ENCODE measurements at regions of chr6 and their contacts with region 1.

Region 1: GRCh38 chr6:27838058-27838944 is 73.9 kb downstream of the OR2B2 start:
- DNase-seq: peak; percentile 50 to 87
- H3K4me3 ChIP-seq: peak overlapping the region; percentile 71 to 80
- H3K27ac ChIP-seq: peak overlapping the region; percentile 95 to 96
- H3K4me1 ChIP-seq: peaks cover 0 to 8% of the 10 kb centered on the region in 2 donors
- H3K27me3 ChIP-seq: no peaks in the 10 kb centered on the region
- CTCF ChIP-seq: no peak

Region 2: DNA sequence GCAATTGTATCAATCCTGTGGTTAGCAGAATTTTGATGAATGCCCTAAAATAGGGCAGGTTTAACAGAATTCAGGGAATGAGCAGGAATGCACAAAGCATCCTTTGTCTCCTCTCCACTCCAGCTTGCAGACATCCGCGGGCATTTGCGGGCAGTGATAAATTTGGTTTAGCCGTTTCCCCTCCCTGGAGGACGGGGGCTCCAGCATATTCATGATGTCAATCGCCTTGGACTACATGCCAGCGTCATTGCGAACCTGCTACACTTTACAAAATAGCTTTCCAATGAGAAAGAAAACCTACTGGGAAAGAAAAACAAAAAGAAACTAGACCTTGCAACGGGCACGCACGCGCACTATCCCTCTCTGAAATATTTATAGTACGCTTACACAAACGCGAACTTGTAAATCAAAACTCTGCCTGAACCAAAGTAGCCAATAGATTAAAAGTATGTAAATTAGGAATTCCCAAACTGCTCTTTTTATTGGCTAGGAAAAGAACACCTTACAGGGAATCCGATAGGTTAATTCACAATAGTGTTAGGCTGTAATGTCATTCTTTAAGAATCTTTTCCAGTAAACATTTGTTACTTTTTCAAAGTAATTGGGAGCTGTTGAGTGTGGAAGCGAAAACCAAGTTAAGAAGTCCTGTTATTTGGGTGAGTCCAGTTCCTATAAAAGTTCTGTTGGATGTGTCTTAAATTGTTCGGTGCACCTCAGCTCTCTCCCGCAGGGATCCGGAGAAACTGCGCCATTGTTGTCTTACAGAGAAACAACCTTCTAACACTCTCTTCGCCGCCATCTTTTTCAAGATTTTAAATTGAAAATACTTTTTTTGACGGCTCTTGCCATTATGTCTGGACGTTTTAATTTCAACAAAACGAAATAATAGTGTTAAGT is 1614.4 kb before region 1 on chr6:
- intact Hi-C with region 1: loop called (anchors 10 kb)
- DNase-seq: peak in 1 of 2 donors; percentile 87
- H3K4me3 ChIP-seq: peak overlapping the region; percentile 64 to 65
- H3K27ac ChIP-seq: peak overlapping the region; percentile 82 to 92
- H3K4me1 ChIP-seq: no peaks in the 10 kb centered on the region
- H3K27me3 ChIP-seq: no peaks in the 10 kb centered on the region
- CTCF ChIP-seq: no peak

Region 3: DNA sequence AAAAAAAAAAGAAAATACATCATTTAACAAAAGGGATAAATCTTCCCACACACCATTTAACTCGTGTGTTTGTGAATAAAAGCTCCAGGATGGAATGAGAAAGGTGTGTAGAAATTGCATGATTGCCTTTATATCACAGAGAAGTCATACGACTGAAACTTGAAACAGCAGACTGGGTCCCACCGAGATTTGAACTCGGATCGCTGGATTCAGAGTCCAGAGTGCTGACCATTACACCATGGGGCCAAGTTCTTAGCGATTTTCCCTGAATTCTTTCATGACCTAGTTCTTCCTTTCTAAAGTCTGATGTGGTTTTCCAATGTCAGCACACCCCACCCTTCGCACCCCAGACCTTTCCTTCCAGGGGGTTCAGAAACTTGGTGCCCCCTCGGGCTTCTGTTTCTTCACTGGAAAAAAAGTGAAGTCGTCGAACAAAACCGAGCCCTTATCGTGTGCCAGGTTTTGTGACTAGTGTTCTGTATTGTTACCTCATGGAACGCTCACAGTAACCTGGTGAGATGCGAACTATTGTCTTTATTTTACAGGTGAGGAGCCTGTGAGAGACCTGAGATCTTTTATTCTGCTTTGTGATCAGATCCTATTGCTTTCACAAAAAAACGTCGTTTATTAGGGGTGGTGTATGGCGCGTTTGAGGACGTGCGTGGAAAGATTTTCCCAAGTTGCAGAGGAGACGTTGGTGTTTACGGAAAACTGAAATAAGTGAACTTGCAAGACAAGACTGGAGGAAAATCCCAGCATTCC is 46.9 kb before region 1 on chr6:
- intact Hi-C with region 1: no loop called
- DNase-seq: peak in 1 of 2 donors; percentile 84
- H3K4me3 ChIP-seq: peak overlapping the region; percentile 47 to 71
- H3K27ac ChIP-seq: peak overlapping the region; percentile 68 to 78
- H3K4me1 ChIP-seq: no peaks in the 10 kb centered on the region
- H3K27me3 ChIP-seq: no peaks in the 10 kb centered on the region
- CTCF ChIP-seq: no peak

Region 4: GRCh38 chr6:27809939-27810767 is 28.1 kb before region 1 on chr6:
- intact Hi-C with region 1: loop called (anchors 1 kb)
- DNase-seq: peak in 1 of 2 donors; percentile 86
- H3K4me3 ChIP-seq: peak overlapping the region; percentile 65 to 87
- H3K27ac ChIP-seq: peak overlapping the region; percentile 82 to 92
- H3K4me1 ChIP-seq: peaks cover 5 to 6% of the 10 kb centered on the region in 2 donors
- H3K27me3 ChIP-seq: no peaks in the 10 kb centered on the region
- CTCF ChIP-seq: peak in 1 of 3 experiments; percentile 13

Region 5: GRCh38 chr6:27864906-27865849 is 26.9 kb after region 1 on chr6:
- intact Hi-C with region 1: loop called (anchors 1 kb)
- DNase-seq: peak in 1 of 2 donors; percentile 78
- H3K4me3 ChIP-seq: peak overlapping the region; percentile 50 to 73
- H3K27ac ChIP-seq: peak overlapping the region; percentile 58 to 61
- H3K4me1 ChIP-seq: peaks cover 6 to 14% of the 10 kb centered on the region in 2 donors
- H3K27me3 ChIP-seq: no peaks in the 10 kb centered on the region
- CTCF ChIP-seq: no peak

Region 6: GRCh38 chr6:27902335-27903314 is 64.3 kb after region 1 on chr6:
- intact Hi-C with region 1: loop called (anchors 2 kb)
- DNase-seq: peak in 1 of 2 donors; percentile 93
- H3K4me3 ChIP-seq: peak overlapping the region; percentile 59 to 73
- H3K27ac ChIP-seq: peak overlapping the region; percentile 87 to 94
- H3K4me1 ChIP-seq: peaks cover 0 to 3% of the 10 kb centered on the region in 2 donors
- H3K27me3 ChIP-seq: no peaks in the 10 kb centered on the region
- CTCF ChIP-seq: no peak

Measured in ascending aorta (tissue), 2 donors.